Common myeloid progenitor, CD34-positive (primary cell): ENCODE measurements at regions of chr11 and their contacts with region 1.

Region 1: GRCh38 chr11:58905721-58906477 is 33.4 kb upstream of the GLYATL1 start:
- DNase-seq: peak in 2 of 3 donors; percentile 22 to 25
- H3K4me3 ChIP-seq: peak overlapping the region in 4 of 7 experiments; percentile 50 to 78 (median 70)
- H3K27ac ChIP-seq: no peak overlapping the region
- H3K4me1 ChIP-seq: peaks cover 0 to 14% (median 6%) of the 10 kb centered on the region in 4 experiments
- H3K27me3 ChIP-seq: peaks cover 0 to 35% (median 5%) of the 10 kb centered on the region in 5 experiments

Region 2: DNA sequence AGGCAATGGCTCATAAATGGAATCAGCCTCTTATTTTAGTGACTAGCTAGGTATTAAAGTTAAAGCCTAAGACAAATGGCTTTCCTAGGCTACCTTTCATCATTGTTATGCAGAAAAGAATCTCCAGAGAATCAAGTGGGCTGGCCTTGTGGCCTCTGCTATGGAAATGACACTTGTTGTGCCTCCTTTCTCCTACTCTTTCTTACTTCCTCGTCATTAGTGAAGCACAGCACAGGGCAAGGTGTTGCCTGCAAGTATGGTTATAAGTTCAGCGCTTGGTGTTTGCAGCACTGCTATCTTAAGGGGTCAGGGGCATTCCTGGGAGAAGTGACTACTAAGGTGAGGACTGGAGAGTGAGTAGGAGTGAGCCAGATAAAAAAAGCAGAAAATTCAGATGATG is 12.0 kb before region 1 on chr11:
- CTCF ChIA-PET with region 1: no interaction called
- POLR2A ChIA-PET with region 1: no interaction called
- DNase-seq: no peak
- H3K4me3 ChIP-seq: no peak overlapping the region
- H3K27ac ChIP-seq: no peak overlapping the region
- H3K4me1 ChIP-seq: peaks cover 0 to 7% (median 1%) of the 10 kb centered on the region in 4 experiments
- H3K27me3 ChIP-seq: no peaks in the 10 kb centered on the region

Region 3: GRCh38 chr11:58927393-58928106 is 21.7 kb after region 1 on chr11:
- CTCF ChIA-PET with region 1: interaction called, 31 read pairs
- POLR2A ChIA-PET with region 1: no interaction called
- DNase-seq: peak; percentile 72 to 93 (median 91)
- H3K4me3 ChIP-seq: peak overlapping the region; percentile 5 to 82 (median 58)
- H3K27ac ChIP-seq: no peak overlapping the region
- H3K4me1 ChIP-seq: peaks cover 6 to 21% (median 12%) of the 10 kb centered on the region in 4 experiments
- H3K27me3 ChIP-seq: no peaks in the 10 kb centered on the region

Region 4: GRCh38 chr11:58949184-58949583 is 43.3 kb after region 1 on chr11:
- CTCF ChIA-PET with region 1: no interaction called
- POLR2A ChIA-PET with region 1: no interaction called
- DNase-seq: no peak
- H3K4me3 ChIP-seq: no peak overlapping the region
- H3K27ac ChIP-seq: no peak overlapping the region
- H3K4me1 ChIP-seq: no peaks in the 10 kb centered on the region
- H3K27me3 ChIP-seq: no peaks in the 10 kb centered on the region